ENCODE measurements at regions of chr16 and their contacts with region 1.

Region 1: DNA sequence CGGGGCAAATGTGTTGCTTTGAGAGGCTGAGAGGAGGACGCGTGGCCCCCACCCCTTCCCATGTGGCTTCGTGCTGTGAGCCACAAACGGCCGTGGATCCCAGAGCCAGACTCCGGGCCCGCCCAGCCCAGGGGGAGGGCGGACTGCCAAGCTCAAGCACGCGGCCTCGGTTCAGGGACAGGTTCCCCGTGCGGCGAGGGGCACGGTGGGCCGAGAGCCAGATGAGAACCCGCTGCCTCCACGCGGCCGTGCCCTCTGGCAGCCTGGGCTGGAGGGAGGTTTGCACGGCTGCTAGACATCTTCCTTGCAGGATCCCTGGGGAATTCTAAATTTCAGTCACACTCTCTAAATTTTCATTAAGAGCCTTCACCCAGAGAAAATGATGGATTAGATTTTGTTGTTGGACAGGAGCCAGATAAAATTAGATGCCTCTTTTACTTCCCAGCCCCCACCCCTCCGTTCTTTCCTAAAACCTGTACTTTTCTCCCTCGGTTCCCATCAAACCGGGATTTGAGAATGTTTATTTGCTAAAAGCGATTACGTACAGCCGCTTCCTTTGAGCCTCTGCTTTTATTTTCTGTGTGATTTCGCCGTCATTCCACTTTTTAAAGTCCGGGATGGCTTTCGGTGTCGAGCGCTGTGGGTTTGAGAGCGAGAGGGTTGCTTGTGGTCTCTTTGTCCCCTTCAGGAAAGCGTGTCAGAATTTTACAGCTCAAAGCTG is 25.0 kb upstream of the GNG13 start:
- DNase-seq: no peak
- ATAC-seq: no peak
- H3K4me3 ChIP-seq: no peak overlapping the region
- H3K27ac ChIP-seq: no peak overlapping the region
- H3K4me1 ChIP-seq: no peaks in the 10 kb centered on the region
- H3K27me3 ChIP-seq: peaks cover 3 to 47% (median 11%) of the 10 kb centered on the region in 9 donors
- CTCF ChIP-seq: no peak
- POLR2A ChIP-seq: no peak

Region 2: DNA sequence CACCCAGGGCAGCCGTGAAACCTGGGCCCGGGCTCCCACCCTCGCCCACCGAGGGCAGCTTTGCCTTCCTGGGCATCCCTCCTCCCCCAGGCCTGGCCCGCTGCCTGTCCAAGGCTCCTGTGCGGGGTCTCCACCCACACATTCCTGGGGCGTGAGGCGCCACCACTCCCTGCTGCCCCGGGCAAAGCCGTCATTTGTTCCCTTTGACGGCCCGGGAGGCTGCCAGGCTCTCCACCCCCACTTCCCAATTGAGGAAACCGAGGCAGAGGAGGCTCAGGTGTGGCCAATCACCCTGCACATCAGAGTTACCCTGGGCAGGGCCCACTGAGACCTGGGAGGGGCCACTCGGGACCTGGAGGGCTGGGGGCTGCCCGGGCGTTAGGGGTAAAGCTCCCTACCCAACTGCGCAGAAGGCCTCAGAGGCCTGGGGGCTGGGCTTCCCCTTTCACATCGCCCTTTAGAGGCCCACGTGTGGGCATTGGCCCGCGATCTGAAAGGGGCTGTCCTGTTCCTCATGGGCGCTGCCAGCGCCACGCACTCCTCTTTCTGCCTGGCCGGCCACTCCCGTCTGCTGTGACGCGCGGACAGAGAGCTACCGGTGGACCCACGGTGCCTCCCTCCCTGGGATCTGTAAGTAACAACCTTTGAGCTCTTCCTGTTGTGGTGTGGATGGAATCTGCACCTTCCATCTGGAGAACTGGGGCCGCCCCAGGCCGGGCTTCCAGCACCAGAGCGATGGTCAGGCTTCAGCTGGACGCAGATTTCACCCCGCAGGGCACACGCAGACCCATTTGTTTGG is 64.8 kb before region 1 on chr16 and contains the start of gene MSLN:
- intact Hi-C with region 1: no loop called
- DNase-seq: peak in 1 of 5 donors; percentile 6
- ATAC-seq: no peak
- H3K4me3 ChIP-seq: no peak within 1 kb of the TSS
- H3K27ac ChIP-seq: no peak within 1 kb of the TSS
- H3K4me1 ChIP-seq: peaks cover 0 to 4% (median 0%) of the 10 kb centered on the region in 12 donors
- H3K27me3 ChIP-seq: peaks cover 0 to 20% (median 0%) of the 10 kb centered on the region in 9 donors
- CTCF ChIP-seq: no peak
- POLR2A ChIP-seq: no peak
- total RNA-seq, gene MSLN: 0.48 to 82.2 (median 0.50) TPM in 3 of 9 donors, not detected in the others

Region 3: GRCh38 chr16:894841-895240 is 69.3 kb after region 1 on chr16:
- intact Hi-C with region 1: loop called in 1 of 10 experiments (anchors 10 kb)
- DNase-seq: peak in 1 of 5 donors; percentile 59
- ATAC-seq: no peak
- H3K4me3 ChIP-seq: no peak overlapping the region
- H3K27ac ChIP-seq: no peak overlapping the region
- H3K4me1 ChIP-seq: peaks cover 0 to 10% (median 0%) of the 10 kb centered on the region in 12 donors
- H3K27me3 ChIP-seq: no peaks in the 10 kb centered on the region
- CTCF ChIP-seq: no peak
- POLR2A ChIP-seq: no peak